PC-9 (cell line): ENCODE measurements at regions of chr11 and their contacts with region 1.

Region 1: DNA sequence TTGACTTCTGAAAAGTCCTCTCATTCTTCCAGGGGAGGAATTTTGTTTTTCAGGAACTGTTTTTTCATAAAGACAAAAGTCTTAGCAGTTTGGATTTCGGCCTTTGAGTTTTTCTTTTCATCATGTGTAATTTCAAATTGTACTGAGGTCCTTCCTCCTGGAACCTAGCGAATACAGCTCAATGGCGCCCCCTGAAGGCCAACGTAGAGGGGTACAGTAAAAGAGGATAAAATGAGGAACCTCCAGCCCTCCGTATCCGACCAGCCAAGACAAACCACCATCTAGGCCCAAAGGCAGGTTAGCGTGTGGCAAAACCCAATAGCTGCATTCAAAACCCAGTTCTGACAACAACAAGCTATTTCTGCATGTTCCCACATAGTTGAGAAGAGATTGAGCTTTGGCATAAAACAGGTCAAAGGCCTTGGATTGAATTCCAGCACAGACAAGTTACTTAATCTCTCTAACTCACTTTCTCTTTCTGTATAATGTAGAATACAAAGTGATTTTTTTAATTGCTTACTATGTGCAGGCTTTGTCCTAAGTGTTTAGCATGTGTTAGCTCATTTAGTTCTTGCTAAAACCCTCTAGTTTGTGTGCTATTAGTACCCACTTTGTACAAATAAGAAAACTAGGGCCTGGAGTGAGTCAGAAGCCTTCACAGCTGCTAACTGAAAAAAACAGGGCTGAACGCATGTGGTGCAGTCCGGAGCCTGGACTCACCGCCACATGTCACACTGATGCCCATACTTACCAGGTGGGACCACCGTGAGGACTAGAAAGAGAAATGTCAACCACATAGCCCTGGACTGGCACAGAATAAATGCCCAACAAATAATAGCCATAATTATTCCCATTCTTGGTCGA is 43.2 kb upstream of the ETS1 start:
- DNase-seq: peak; percentile 60 to 73
- H3K4me3 ChIP-seq: no peak overlapping the region
- H3K27ac ChIP-seq: no peak overlapping the region
- H3K4me1 ChIP-seq: peaks cover 9% of the 10 kb centered on the region
- H3K27me3 ChIP-seq: no peaks in the 10 kb centered on the region
- CTCF ChIP-seq: peak; percentile 93

Region 2: GRCh38 chr11:128026596-128026995 is 604.0 kb before region 1 on chr11:
- CTCF ChIA-PET with region 1: no interaction called
- POLR2A ChIA-PET with region 1: no interaction called
- intact Hi-C with region 1: loop called (anchors 1 kb)
- DNase-seq: peak; percentile 57 to 83
- H3K4me3 ChIP-seq: no peak overlapping the region
- H3K27ac ChIP-seq: no peak overlapping the region
- H3K4me1 ChIP-seq: peaks cover 8% of the 10 kb centered on the region; the same call in 1 of the 2 replicates
- H3K27me3 ChIP-seq: no peaks in the 10 kb centered on the region
- CTCF ChIP-seq: no peak

Region 3: GRCh38 chr11:128157423-128158298 is 472.9 kb before region 1 on chr11:
- CTCF ChIA-PET with region 1: interaction called, 3 read pairs
- POLR2A ChIA-PET with region 1: no interaction called
- intact Hi-C with region 1: loop called (anchors 1 kb)
- DNase-seq: peak; percentile 50 to 58
- H3K4me3 ChIP-seq: peak overlapping the region; percentile 49; the same call in 1 of the 2 replicates
- H3K27ac ChIP-seq: no peak overlapping the region
- H3K4me1 ChIP-seq: no peaks in the 10 kb centered on the region
- H3K27me3 ChIP-seq: no peaks in the 10 kb centered on the region
- CTCF ChIP-seq: peak; percentile 99

Region 4: DNA sequence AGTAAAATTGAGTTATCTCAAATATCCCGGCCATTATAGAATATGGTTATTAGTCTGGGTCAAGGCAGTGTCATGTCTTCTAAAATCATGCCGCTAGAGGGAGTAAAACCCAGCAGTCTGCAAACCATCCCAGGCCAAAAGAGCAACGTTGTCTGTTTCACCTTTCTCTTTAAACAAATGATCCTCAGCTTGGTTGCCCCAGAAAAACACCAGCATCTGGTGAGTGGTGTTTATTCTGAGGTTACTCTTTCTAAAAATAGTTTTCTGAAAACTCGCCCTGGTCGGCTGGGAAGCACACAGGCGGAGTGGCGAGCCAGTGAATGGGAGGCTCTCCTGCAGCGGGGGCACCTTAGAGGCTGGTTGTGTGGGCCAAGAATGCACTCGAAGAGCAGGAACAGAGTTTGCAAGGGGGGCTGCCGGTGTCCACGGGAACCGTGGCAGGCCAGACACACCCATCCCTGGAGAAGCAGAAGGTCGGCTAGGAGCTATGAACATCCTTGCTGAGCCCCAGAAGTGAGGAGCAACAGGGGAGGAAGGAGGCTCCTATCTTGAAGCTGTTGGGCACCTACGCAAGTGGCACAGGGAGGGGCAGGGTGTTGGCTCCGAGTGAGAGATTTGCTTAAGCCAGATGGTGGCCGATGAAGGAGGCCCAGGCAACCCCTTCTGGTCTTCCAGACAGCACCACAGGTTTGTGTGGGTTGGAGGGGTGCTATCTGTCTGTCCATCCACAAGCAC is 340.3 kb before region 1 on chr11:
- CTCF ChIA-PET with region 1: no interaction called
- POLR2A ChIA-PET with region 1: no interaction called
- intact Hi-C with region 1: loop called (anchors 1 kb)
- DNase-seq: peak; percentile 45 to 58
- H3K4me3 ChIP-seq: no peak overlapping the region
- H3K27ac ChIP-seq: no peak overlapping the region
- H3K4me1 ChIP-seq: peaks cover 18% of the 10 kb centered on the region
- H3K27me3 ChIP-seq: no peaks in the 10 kb centered on the region
- CTCF ChIP-seq: peak; percentile 93

Region 5: GRCh38 chr11:128484172-128484571 is 146.4 kb before region 1 on chr11:
- CTCF ChIA-PET with region 1: interaction called, 5 read pairs
- POLR2A ChIA-PET with region 1: no interaction called
- intact Hi-C with region 1: loop called (anchors 1 kb)
- DNase-seq: no peak
- H3K4me3 ChIP-seq: no peak overlapping the region
- H3K27ac ChIP-seq: no peak overlapping the region
- H3K4me1 ChIP-seq: peaks cover 6% of the 10 kb centered on the region
- H3K27me3 ChIP-seq: no peaks in the 10 kb centered on the region
- CTCF ChIP-seq: peak; percentile 45; the same call in 1 of the 2 replicates

Region 6: GRCh38 chr11:128831174-128832120 is 200.8 kb after region 1 on chr11:
- CTCF ChIA-PET with region 1: interaction called, 3 read pairs
- POLR2A ChIA-PET with region 1: no interaction called
- intact Hi-C with region 1: loop called (anchors 1 kb)
- DNase-seq: peak; percentile 49 to 66
- H3K4me3 ChIP-seq: peak overlapping the region; percentile 6; the same call in 1 of the 2 replicates
- H3K27ac ChIP-seq: no peak overlapping the region
- H3K4me1 ChIP-seq: no peaks in the 10 kb centered on the region
- H3K27me3 ChIP-seq: no peaks in the 10 kb centered on the region
- CTCF ChIP-seq: peak; percentile 95